ENCODE measurements at regions of chr6 and their contacts with region 1.

Region 1: GRCh38 chr6:51768087-51768486 is 319.3 kb downstream of the PKHD1 start:
- DNase-seq: no peak
- H3K4me3 ChIP-seq: no peak overlapping the region
- H3K27ac ChIP-seq: no peak overlapping the region
- H3K4me1 ChIP-seq: no peaks in the 10 kb centered on the region
- H3K27me3 ChIP-seq: no peaks in the 10 kb centered on the region
- CTCF ChIP-seq: no peak

Region 2: GRCh38 chr6:52929321-52930164 is 1161.5 kb after region 1 on chr6:
- intact Hi-C with region 1: loop called (anchors 10 kb)
- DNase-seq: no peak
- H3K4me3 ChIP-seq: no peak overlapping the region
- H3K27ac ChIP-seq: no peak overlapping the region
- H3K4me1 ChIP-seq: no peaks in the 10 kb centered on the region
- H3K27me3 ChIP-seq: no peaks in the 10 kb centered on the region
- CTCF ChIP-seq: no peak

Measured in tibial artery (tissue), 4 donors.